ENCODE measurements at regions of chr12 and their contacts with region 1.

Region 1: DNA sequence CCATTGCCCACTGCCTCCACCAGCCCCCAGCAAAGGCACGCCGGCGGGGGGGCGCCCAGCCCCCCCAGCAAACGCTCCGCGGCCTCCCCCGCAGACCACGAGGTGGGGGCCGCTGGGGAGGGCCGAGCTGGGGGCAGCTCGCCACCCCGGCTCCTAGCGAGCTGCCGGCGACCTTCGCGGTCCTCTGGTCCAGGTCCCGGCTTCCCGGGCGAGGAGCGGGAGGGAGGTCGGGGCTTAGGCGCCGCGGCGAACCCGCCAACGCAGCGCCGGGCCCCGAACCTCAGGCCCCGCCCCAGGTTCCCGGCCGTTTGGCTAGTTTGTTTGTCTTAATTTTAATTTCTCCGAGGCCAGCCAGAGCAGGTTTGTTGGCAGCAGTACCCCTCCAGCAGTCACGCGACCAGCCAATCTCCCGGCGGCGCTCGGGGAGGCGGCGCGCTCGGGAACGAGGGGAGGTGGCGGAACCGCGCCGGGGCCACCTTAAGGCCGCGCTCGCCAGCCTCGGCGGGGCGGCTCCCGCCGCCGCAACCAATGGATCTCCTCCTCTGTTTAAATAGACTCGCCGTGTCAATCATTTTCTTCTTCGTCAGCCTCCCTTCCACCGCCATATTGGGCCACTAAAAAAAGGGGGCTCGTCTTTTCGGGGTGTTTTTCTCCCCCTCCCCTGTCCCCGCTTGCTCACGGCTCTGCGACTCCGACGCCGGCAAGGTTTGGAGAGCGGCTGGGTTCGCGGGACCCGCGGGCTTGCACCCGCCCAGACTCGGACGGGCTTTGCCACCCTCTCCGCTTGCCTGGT is at the start of gene CDKN1B:
- DNase-seq: peak; percentile 96
- H3K4me3 Mint-ChIP-seq: peak within 1 kb of the TSS; percentile 98
- H3K27ac Mint-ChIP-seq: peak within 1 kb of the TSS; percentile 99
- H3K4me1 Mint-ChIP-seq: peaks cover 29% of the 10 kb centered on the region
- H3K27me3 Mint-ChIP-seq: no peaks in the 10 kb centered on the region
- CTCF ChIP-seq: no peak
- total RNA-seq, gene CDKN1B: 33.9 and 41.6 TPM in 2 replicates

Region 2: DNA sequence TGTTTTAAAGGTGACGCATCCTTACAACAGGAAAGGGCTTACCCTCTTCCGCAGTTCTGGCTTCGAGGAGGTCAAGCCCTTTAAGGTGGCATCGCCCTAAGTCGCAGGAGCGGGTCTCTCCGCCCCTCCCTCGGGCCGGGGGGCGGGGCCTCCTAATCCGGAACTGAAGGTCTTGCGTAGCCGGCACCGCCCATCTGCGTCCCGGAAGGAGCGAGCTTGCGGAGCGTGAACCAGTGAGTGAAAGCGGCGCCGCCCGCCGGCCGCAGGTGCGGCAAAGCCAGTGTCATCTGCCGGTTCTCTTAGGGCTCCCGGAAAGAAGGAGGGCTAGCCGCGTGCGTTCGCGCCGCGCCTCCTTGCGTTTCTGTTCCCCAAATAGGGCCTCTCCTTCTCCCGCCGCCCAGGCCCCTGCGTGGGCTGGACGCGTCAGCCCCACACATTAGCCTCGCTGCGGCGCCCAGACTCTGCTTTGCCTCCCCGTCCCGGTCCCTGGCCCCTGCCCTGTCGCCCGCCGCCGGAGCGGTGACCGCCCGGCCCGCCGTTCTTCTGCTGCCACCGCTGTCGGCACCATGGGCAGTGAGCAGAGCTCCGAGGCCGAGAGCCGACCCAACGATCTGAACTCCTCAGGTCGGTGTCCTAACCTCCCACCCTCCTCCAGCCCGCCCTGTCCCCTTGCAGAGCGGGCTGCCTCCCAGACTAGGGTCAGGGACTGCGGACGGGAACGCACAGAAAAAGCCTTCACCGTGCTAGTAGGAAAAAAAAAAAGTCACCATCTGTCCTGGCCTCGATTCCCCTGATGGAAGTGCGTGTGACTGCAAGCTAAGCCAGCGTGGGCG is 359.9 kb before region 1 on chr12 and contains the start of gene BORCS5:
- CTCF ChIA-PET with region 1: interaction called, 11 read pairs
- POLR2A ChIA-PET with region 1: interaction called, 163 read pairs
- intact Hi-C with region 1: no loop called
- DNase-seq: peak; percentile 98
- H3K4me3 Mint-ChIP-seq: peak within 1 kb of the TSS; percentile 91
- H3K27ac Mint-ChIP-seq: peak within 1 kb of the TSS; percentile 94
- H3K4me1 Mint-ChIP-seq: no peaks in the 10 kb centered on the region
- H3K27me3 Mint-ChIP-seq: no peaks in the 10 kb centered on the region
- CTCF ChIP-seq: no peak
- total RNA-seq, gene BORCS5: 11.0 and 15.3 TPM in 2 replicates

Region 3: GRCh38 chr12:12696562-12697383 is 20.2 kb before region 1 on chr12:
- CTCF ChIA-PET with region 1: interaction called, 5 read pairs
- POLR2A ChIA-PET with region 1: interaction called, 22 read pairs
- intact Hi-C with region 1: no loop called
- DNase-seq: peak; percentile 86
- H3K4me3 Mint-ChIP-seq: peak overlapping the region; percentile 88
- H3K27ac Mint-ChIP-seq: peak overlapping the region; percentile 99
- H3K4me1 Mint-ChIP-seq: peaks cover 16% of the 10 kb centered on the region
- H3K27me3 Mint-ChIP-seq: no peaks in the 10 kb centered on the region
- CTCF ChIP-seq: no peak

Region 4: DNA sequence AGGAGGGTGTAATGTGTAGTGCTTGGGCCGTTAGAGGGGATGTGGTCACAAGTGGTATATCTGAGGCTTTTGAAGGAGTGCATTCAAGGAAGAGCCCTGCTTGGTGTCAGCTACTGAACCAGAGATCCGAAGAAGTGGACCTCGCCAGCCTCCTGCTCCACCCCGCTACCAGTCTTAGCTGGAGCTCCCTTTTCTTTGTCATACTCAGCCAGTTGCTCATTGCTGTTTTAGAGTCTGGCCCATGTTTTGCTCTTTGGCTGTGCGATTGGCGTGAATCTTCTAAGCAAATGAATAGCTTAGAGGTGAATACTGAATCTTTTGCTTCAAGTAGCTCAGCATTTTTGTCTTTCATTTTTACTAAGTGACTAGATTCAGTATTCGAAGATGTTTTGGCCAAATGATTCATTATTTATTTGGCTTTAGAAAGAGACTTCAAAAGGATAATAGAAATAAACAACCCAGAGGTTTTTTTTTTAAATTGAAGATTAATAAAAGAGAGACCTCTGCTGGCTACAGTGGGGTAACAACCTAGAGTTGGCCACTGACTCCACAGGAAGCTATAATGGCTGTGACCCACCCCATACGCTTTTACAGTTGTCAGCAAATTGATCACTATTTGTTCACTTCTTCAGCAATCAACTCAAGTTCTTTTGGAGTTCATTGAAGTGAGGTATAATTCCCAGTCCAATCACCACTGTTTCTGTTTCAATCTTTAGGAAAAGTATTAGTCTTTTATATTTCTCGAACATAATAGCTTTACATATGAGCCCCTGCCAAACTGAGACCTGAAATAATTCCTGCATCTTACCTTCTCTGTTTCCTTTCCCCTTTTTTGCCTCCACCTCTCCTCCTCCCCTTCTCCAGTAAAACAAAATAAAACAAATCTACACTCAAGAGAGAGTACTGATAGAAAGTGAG is 20.0 kb after region 1 on chr12:
- CTCF ChIA-PET with region 1: interaction called, 20 read pairs
- POLR2A ChIA-PET with region 1: interaction called, 122 read pairs
- intact Hi-C with region 1: no loop called
- DNase-seq: peak; percentile 55
- H3K4me3 Mint-ChIP-seq: no peak overlapping the region
- H3K27ac Mint-ChIP-seq: peak overlapping the region; percentile 71
- H3K4me1 Mint-ChIP-seq: peaks cover 24% of the 10 kb centered on the region
- H3K27me3 Mint-ChIP-seq: no peaks in the 10 kb centered on the region
- CTCF ChIP-seq: peak; percentile 52

Region 5: GRCh38 chr12:12899530-12900380 is 182.8 kb after region 1 on chr12:
- CTCF ChIA-PET with region 1: no interaction called
- POLR2A ChIA-PET with region 1: interaction called, 6 read pairs
- intact Hi-C with region 1: loop called (anchors 5 kb)
- DNase-seq: peak; percentile 93
- H3K4me3 Mint-ChIP-seq: peak overlapping the region; percentile 68
- H3K27ac Mint-ChIP-seq: peak overlapping the region; percentile 86
- H3K4me1 Mint-ChIP-seq: peaks cover 50% of the 10 kb centered on the region
- H3K27me3 Mint-ChIP-seq: no peaks in the 10 kb centered on the region
- CTCF ChIP-seq: no peak

Region 6: DNA sequence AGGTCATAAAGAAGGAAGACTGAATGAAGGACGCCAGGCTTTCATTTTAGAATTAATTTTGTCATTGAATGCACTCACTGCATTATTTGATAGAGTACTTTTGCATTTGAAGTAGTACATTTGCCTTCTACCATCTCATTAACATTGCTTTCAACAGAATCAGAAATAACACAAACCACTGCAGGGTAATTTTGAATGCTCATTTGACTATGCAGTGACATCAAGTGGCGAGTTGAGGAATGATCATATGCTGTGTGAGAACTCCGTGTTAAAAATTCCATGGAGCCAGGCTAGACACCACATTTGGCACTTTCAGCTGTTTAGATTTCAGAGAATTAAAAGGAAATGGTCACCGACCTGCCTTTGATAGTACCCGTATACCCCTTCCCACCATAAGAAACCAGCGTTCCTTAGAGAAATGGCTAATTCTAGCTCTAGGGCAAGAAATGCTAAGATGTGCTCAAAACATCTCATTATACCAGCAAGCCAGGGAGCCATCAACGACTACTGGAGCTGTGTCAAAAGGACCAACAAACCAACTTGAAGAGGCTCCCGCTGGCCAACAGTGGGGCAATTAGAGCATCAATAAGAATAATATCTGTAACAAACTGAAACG is 266.5 kb after region 1 on chr12:
- CTCF ChIA-PET with region 1: no interaction called
- POLR2A ChIA-PET with region 1: interaction called, 3 read pairs
- intact Hi-C with region 1: loop called (anchors 1 kb)
- DNase-seq: peak; percentile 65
- H3K4me3 Mint-ChIP-seq: no peak overlapping the region
- H3K27ac Mint-ChIP-seq: peak overlapping the region; percentile 0
- H3K4me1 Mint-ChIP-seq: peaks cover 6% of the 10 kb centered on the region
- H3K27me3 Mint-ChIP-seq: no peaks in the 10 kb centered on the region
- CTCF ChIP-seq: peak; percentile 66

Measured in MCF 10A (cell line).